K562 (cell line): ENCODE measurements at regions of chr12 and their contacts with region 1.

Region 1: GRCh38 chr12:110224379-110225304 is 56.4 kb upstream of the ATP2A2 start:
- DNase-seq: peak in 2 of 4 experiments; percentile 22 to 23
- ATAC-seq: no peak; the same call in 2 of the 3 replicates
- H3K4me3 ChIP-seq: no peak overlapping the region
- H3K27ac ChIP-seq: no peak overlapping the region
- H3K4me1 ChIP-seq: no peaks in the 10 kb centered on the region
- H3K27me3 ChIP-seq: no peaks in the 10 kb centered on the region
- CTCF ChIP-seq: peak; percentile 41 to 61 (median 55); a peak in 5 of 6 replicates
- EP300 ChIP-seq: no peak
- POLR2A ChIP-seq: no peak
- RAD21 ChIP-seq: peak; percentile 19 to 54; a peak in 2 of 4 replicates

Region 2: DNA sequence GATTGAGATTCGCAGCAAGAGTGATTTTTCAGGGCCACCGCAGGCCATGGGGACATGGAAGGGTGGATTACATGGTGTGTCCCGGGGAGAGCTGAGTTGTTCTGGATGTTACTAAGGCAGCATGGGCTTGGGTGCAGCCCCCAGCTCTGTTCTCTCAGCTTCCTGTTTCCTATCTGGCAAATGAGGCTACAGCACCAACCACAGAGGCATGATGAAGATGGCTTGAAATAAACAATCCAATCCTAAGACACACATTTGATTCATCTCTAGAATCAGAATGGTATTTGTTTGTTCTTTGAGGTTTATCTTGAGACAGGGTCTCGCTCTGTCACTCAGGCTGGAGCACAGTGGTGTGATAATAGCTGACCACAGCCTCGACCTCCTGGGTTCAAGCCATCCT is 365.9 kb before region 1 on chr12:
- CTCF ChIA-PET with region 1: no interaction called
- POLR2A ChIA-PET with region 1: no interaction called
- in situ Hi-C with region 1: no loop called
- intact Hi-C with region 1: loop called (anchors 5 kb)
- DNase-seq: no peak
- ATAC-seq: no peak
- H3K4me3 ChIP-seq: no peak overlapping the region
- H3K27ac ChIP-seq: no peak overlapping the region
- H3K4me1 ChIP-seq: peaks cover 0 to 8% of the 10 kb centered on the region in 2 experiments; a peak in 2 of 5 replicates
- H3K27me3 ChIP-seq: peaks cover 0 to 14% of the 10 kb centered on the region in 2 experiments; a peak in 2 of 5 replicates
- CTCF ChIP-seq: no peak
- EP300 ChIP-seq: no peak
- POLR2A ChIP-seq: no peak
- RAD21 ChIP-seq: no peak